PC-9 (cell line): ENCODE measurements at regions of chr19 and their contacts with region 1.

Region 1: GRCh38 chr19:9768175-9769112 is at the start of gene ZNF846:
- DNase-seq: peak; percentile 94 to 96
- H3K4me3 ChIP-seq: peak within 1 kb of the TSS; percentile 78
- H3K27ac ChIP-seq: peak within 1 kb of the TSS; percentile 76
- H3K4me1 ChIP-seq: peaks cover 5% of the 10 kb centered on the region; the same call in 1 of the 2 replicates
- H3K27me3 ChIP-seq: no peaks in the 10 kb centered on the region
- CTCF ChIP-seq: no peak
- total RNA-seq, gene ZNF846: 8.3 and 9.6 TPM in 2 replicates

Region 2: GRCh38 chr19:9674663-9675357 is 93.6 kb before region 1 on chr19 and contains the start of gene ZNF562:
- CTCF ChIA-PET with region 1: interaction called, 9 read pairs
- POLR2A ChIA-PET with region 1: no interaction called
- intact Hi-C with region 1: loop called (anchors 5 kb)
- DNase-seq: peak; percentile 86 to 88
- H3K4me3 ChIP-seq: peak within 1 kb of the TSS; percentile 70
- H3K27ac ChIP-seq: peak within 1 kb of the TSS; percentile 86
- H3K4me1 ChIP-seq: no peaks in the 10 kb centered on the region
- H3K27me3 ChIP-seq: no peaks in the 10 kb centered on the region
- CTCF ChIP-seq: no peak
- total RNA-seq, gene ZNF562: 24.9 and 26.0 TPM in 2 replicates